ENCODE measurements at regions of chr6 and their contacts with region 1.

Region 1: GRCh38 chr6:15264902-15265761 is 19.3 kb downstream of the JARID2 start:
- DNase-seq: no peak
- ATAC-seq: peak; percentile 25
- H3K4me3 ChIP-seq: peak overlapping the region in 1 of 2 experiments; percentile 17
- H3K4me3 Mint-ChIP-seq: peak overlapping the region; percentile 70
- H3K27ac ChIP-seq: no peak overlapping the region
- H3K27ac Mint-ChIP-seq: no peak overlapping the region
- H3K4me1 ChIP-seq: peaks cover 80% of the 10 kb centered on the region
- H3K4me1 Mint-ChIP-seq: peaks cover 90% of the 10 kb centered on the region
- H3K27me3 ChIP-seq: no peaks in the 10 kb centered on the region
- H3K27me3 Mint-ChIP-seq: no peaks in the 10 kb centered on the region
- CTCF ChIP-seq: no peak

Region 2: DNA sequence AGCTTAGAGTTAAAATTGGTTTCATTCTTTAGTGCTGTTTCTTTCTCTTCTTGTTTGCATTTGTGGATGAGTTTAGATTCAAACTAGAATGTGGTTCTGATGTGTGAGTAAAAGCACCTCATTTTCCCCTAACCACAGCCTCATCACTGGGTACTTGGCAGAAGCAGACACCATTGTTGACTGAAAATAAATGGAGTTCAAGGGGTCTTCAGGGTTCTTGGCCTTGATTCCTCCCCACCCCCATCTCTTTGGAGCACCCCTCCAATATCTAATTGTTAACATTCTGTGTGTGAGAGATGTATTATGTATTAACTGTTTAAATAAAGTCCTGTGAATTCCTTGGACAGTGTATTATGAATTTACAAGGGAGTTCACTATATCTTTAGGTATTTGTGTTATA is 40.4 kb after region 1 on chr6:
- CTCF ChIA-PET with region 1: no interaction called
- POLR2A ChIA-PET with region 1: no interaction called
- intact Hi-C with region 1: loop called in 1 of 2 experiments (anchors 5 kb)
- DNase-seq: peak in 2 of 9 experiments; percentile 33 to 62
- ATAC-seq: peak; percentile 58
- H3K4me3 ChIP-seq: no peak overlapping the region
- H3K4me3 Mint-ChIP-seq: peak overlapping the region; percentile 3
- H3K27ac ChIP-seq: peak overlapping the region in 1 of 2 experiments; percentile 62
- H3K27ac Mint-ChIP-seq: peak overlapping the region; percentile 53
- H3K4me1 ChIP-seq: peaks cover 45% of the 10 kb centered on the region
- H3K4me1 Mint-ChIP-seq: peaks cover 71% of the 10 kb centered on the region
- H3K27me3 ChIP-seq: no peaks in the 10 kb centered on the region
- H3K27me3 Mint-ChIP-seq: no peaks in the 10 kb centered on the region
- CTCF ChIP-seq: no peak

Region 3: DNA sequence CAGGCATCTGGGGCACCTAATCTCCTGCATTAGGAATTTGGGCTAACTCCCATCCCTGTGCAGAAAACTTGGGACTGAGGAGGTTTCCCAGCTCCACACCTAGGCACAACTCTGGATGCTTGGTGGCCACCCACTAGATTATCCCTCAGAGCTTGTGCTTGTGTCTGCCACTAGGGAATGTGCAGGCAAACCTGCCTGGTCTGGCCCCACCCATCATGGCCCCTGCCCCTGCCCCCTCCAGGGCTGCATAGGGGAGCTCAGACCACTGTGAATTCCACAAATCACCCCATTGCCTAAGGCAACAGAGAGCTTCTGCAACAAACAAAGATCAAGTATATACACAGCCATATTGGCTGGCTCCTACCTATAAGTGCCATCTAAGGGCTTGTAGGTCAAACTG is 1867.8 kb after region 1 on chr6:
- CTCF ChIA-PET with region 1: no interaction called
- POLR2A ChIA-PET with region 1: no interaction called
- intact Hi-C with region 1: no loop called
- DNase-seq: no peak
- ATAC-seq: no peak
- H3K4me3 ChIP-seq: no peak overlapping the region
- H3K4me3 Mint-ChIP-seq: no peak overlapping the region
- H3K27ac ChIP-seq: no peak overlapping the region
- H3K27ac Mint-ChIP-seq: no peak overlapping the region
- H3K4me1 ChIP-seq: no peaks in the 10 kb centered on the region
- H3K4me1 Mint-ChIP-seq: no peaks in the 10 kb centered on the region
- H3K27me3 ChIP-seq: no peaks in the 10 kb centered on the region
- H3K27me3 Mint-ChIP-seq: peaks cover 26% of the 10 kb centered on the region
- CTCF ChIP-seq: no peak

Measured in CD8-positive, alpha-beta T cell (primary cell).